HepG2 (cell line): ENCODE measurements at regions of chr3 and their contacts with region 1.

Region 1: DNA sequence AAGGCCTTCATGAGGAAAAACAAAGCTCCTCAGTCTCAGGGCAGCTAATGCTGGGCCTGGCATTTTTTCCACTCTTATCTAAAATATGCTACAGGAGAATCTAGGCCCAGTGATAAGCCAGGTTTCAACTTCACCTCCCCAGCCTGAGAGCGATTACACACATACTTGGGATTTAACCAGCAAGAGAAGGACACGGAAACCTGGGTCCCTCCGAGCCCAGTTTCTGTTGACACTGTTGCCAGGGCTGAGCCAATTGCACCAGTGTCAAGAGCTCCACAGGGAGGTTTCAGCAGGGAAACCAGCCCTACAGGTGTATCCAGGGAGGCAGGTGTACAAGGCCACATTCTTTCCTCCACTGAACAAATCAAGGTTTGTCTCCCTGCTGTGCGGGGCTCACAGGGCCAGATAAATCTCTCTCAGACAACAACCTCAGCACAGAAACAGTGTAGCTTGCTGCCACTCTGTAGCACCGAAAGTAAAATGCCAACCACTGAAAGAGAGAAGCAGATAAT is 85.4 kb downstream of the MAGI1 start:
- DNase-seq: peak; percentile 84
- ATAC-seq: peak; percentile 62
- H3K4me3 ChIP-seq: peak overlapping the region; percentile 1 to 59 (median 45); a peak in 4 of 6 replicates
- H3K27ac ChIP-seq: peak overlapping the region; percentile 78
- H3K4me1 ChIP-seq: peaks cover 97% of the 10 kb centered on the region
- H3K27me3 ChIP-seq: no peaks in the 10 kb centered on the region
- CTCF ChIP-seq: no peak
- EP300 ChIP-seq: no peak
- POLR2A ChIP-seq: peak in 1 of 2 experiments; percentile 36; a peak in 1 of 4 replicates
- RAD21 ChIP-seq: no peak

Region 2: GRCh38 chr3:65827076-65827475 is 126.3 kb before region 1 on chr3:
- CTCF ChIA-PET with region 1: no interaction called
- POLR2A ChIA-PET with region 1: no interaction called
- in situ Hi-C with region 1: no loop called
- intact Hi-C with region 1: no loop called
- DNase-seq: no peak
- ATAC-seq: no peak
- H3K4me3 ChIP-seq: no peak overlapping the region
- H3K27ac ChIP-seq: no peak overlapping the region
- H3K4me1 ChIP-seq: peaks cover 12% of the 10 kb centered on the region
- H3K27me3 ChIP-seq: no peaks in the 10 kb centered on the region
- CTCF ChIP-seq: no peak
- EP300 ChIP-seq: no peak
- POLR2A ChIP-seq: no peak
- RAD21 ChIP-seq: no peak

Region 3: DNA sequence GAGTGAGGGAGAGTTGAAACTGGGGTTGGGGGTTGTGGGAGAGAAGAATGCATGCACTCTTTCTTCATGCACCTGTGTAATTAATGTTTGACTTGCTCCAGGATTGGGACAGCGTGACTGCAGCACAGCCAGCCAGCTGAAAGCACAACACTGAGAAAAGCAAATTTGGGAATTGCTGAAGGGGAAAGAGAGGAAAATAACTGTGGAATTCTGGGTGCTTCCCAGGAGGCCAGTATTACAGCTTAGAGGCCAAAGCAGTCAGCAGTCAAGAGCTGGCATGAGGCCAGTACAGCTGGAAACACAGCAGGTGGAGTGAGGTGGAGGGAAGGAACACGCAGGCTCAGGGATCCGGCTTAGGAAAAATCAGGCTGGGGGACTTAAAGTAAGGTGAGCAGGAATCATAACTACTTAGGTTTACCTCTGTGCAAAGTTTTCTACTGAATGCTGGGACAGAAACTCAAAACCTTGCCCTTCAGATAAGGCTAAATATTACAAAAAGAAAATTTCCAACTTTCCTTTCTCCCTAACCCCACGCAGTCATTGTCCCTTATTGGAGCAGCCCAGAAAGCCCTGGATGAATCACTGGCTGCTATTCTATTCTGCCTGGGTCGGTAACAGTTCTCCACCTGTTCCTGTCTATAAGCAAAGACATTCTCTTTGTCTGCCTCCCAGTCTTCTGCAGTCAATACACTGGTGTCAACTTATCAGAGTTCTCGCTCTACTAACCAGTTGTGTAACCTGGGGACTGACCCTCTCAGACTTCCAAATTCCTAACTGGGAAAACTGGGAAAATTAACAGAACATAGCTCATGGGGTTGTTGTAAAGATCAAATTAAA is 81.8 kb before region 1 on chr3:
- CTCF ChIA-PET with region 1: no interaction called
- POLR2A ChIA-PET with region 1: no interaction called
- in situ Hi-C with region 1: no loop called
- intact Hi-C with region 1: loop called (anchors 2 kb)
- DNase-seq: peak; percentile 38
- ATAC-seq: peak; percentile 71
- H3K4me3 ChIP-seq: no peak overlapping the region
- H3K27ac ChIP-seq: peak overlapping the region; percentile 14
- H3K4me1 ChIP-seq: peaks cover 48% of the 10 kb centered on the region
- H3K27me3 ChIP-seq: no peaks in the 10 kb centered on the region
- CTCF ChIP-seq: no peak
- EP300 ChIP-seq: no peak
- POLR2A ChIP-seq: no peak
- RAD21 ChIP-seq: no peak

Region 4: GRCh38 chr3:65914740-65915367 is 38.5 kb before region 1 on chr3:
- CTCF ChIA-PET with region 1: no interaction called
- POLR2A ChIA-PET with region 1: no interaction called
- in situ Hi-C with region 1: no loop called
- intact Hi-C with region 1: loop called (anchors 5 kb)
- DNase-seq: no peak
- ATAC-seq: no peak
- H3K4me3 ChIP-seq: no peak overlapping the region
- H3K27ac ChIP-seq: no peak overlapping the region
- H3K4me1 ChIP-seq: peaks cover 7% of the 10 kb centered on the region
- H3K27me3 ChIP-seq: no peaks in the 10 kb centered on the region
- CTCF ChIP-seq: no peak; the same call in 1 of the 2 replicates
- EP300 ChIP-seq: no peak
- POLR2A ChIP-seq: no peak
- RAD21 ChIP-seq: no peak

Region 5: DNA sequence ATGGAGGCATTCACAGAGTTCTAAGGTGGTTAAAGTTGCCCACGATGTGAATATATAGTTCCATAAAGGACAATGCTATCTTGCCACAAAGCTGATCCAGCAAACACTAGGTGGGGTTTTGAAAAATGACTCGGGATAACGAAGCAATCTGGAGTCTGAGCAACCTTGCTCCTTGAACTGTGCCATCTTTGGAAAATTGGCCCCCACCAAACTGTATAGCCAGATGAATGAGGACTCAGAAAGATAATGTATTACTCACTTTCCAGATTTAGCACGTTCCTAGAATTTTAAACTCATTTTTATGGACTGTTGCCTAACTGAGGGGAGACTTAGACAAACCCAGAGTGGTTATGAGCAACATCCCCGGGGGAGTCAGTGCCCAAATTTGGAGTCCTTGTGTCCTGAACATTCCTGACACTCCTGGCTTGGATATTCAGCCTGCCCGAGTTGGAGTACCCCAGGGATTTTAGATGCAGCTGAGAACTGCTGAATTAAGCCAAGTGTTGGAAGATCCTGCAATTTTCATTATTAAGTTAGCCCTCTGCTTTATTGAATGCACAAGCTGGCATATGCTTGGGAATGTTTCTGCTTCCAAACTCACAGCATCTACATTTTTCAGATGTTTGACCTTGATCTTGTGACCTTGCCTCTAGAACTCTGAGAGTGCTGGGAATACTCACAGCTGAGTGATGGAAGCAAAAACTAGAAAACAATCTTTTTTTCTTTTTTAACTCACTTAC is 94.1 kb after region 1 on chr3:
- CTCF ChIA-PET with region 1: no interaction called
- POLR2A ChIA-PET with region 1: no interaction called
- in situ Hi-C with region 1: no loop called
- intact Hi-C with region 1: no loop called
- DNase-seq: peak; percentile 62
- ATAC-seq: peak; percentile 77
- H3K4me3 ChIP-seq: no peak overlapping the region
- H3K27ac ChIP-seq: no peak overlapping the region
- H3K4me1 ChIP-seq: peaks cover 22% of the 10 kb centered on the region
- H3K27me3 ChIP-seq: no peaks in the 10 kb centered on the region
- CTCF ChIP-seq: no peak
- EP300 ChIP-seq: no peak
- POLR2A ChIP-seq: no peak
- RAD21 ChIP-seq: no peak